ENCODE measurements at regions of chr3 and their contacts with region 1.

Region 1: DNA sequence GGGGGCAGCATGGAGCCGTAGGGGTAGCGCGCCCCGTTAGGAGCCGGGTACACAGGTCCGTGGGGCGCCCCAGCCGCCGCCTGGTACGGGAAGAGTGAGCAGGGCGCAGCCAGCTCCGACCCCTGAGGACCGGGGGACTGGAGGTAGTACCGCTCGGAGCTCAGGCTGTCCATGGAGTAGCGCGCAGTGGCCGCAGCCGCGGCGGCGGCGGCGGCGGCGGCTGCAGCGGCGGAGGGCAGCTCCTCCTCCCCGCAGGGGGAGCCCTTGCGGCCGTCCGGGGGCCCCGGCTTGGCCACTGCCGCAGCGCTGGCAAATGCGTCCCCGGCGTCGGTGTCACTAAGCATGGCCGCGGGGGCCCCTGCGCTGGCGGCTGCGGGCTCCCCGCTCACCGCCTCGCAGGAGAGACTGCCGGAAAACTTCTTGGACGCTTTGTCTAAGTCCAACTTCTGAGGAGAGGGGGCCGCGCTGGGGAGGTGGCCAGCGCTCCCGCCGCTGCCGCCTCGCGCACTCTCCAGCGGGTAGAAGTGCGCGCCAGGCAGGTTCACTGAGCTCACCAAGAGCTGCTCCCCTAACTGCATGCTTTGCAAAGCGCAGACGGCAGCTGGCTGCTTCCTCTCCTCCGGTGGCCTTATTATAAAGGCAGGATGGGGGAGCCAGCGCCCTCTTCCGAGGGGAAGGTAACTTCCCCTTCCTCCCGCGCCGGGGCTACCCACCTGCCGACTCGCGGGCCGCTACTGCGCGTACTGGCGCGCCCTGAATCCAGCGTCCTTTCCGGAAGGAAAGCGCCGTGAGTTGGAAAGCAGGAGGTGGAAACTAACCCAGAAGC is at the start of gene EOMES:
- DNase-seq: peak; percentile 68 to 90 (median 78)
- H3K4me3 ChIP-seq: peak within 1 kb of the TSS; percentile 73
- H3K4me3 Mint-ChIP-seq: peak within 1 kb of the TSS; percentile 95 to 100 (median 99)
- H3K27ac ChIP-seq: peak within 1 kb of the TSS; percentile 64
- H3K27ac Mint-ChIP-seq: peak within 1 kb of the TSS; percentile 77 to 98 (median 94)
- H3K4me1 ChIP-seq: peaks cover 25% of the 10 kb centered on the region
- H3K4me1 Mint-ChIP-seq: peaks cover 46 to 57% (median 50%) of the 10 kb centered on the region in 3 donors
- H3K27me3 ChIP-seq: peaks cover 22% of the 10 kb centered on the region
- H3K27me3 Mint-ChIP-seq: peaks cover 29 to 38% of the 10 kb centered on the region in 2 donors
- total RNA-seq, gene EOMES: 37.1 to 37.2 TPM

Region 2: DNA sequence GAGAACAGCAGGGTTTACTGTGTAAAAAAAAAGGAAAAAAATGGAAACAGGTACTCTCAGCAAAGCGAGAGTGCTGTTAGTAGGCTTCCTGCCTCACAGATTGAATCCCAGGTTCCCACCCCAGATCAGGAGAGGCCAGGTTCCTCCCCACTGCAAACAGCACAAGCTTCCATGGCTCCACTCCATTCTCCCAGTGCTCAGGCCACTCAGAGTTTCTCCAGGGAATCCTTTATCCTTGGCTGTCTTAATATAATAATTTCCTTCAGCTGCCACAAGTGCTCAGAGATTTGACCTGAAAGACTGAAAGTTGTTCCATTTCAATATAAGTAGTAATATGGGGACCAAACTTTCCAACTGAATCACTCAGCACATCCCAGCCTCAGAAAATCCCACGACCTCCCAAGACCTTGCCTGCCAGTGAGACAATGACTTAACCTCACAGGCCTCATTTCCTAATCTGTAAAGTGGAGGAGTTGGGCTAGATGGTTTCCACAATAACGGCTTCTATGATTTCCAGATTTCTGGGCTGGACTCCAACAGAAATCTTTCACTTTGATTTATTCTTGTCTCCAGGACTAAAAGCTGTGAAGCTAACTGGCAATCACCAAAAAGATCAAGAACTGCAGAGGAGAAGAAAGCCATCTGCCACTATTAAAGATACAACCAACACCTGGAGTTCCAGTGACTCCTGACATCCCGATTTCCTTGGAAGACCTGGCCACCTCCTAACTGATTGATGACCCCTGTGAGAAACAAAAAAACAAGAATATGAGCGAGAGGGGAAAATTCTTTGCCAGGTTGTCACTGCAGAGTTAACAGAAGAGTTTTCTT is 642.3 kb before region 1 on chr3:
- CTCF ChIA-PET with region 1: no interaction called
- POLR2A ChIA-PET with region 1: no interaction called
- DNase-seq: no peak
- H3K4me3 ChIP-seq: no peak overlapping the region
- H3K4me3 Mint-ChIP-seq: no peak overlapping the region
- H3K27ac ChIP-seq: no peak overlapping the region
- H3K27ac Mint-ChIP-seq: no peak overlapping the region
- H3K4me1 ChIP-seq: no peaks in the 10 kb centered on the region
- H3K4me1 Mint-ChIP-seq: no peaks in the 10 kb centered on the region
- H3K27me3 ChIP-seq: no peaks in the 10 kb centered on the region
- H3K27me3 Mint-ChIP-seq: peaks cover 4 to 13% of the 10 kb centered on the region in 2 donors

Region 3: GRCh38 chr3:27134165-27134796 is 587.6 kb before region 1 on chr3:
- CTCF ChIA-PET with region 1: no interaction called
- POLR2A ChIA-PET with region 1: no interaction called
- DNase-seq: peak; percentile 26 to 70 (median 43)
- H3K4me3 ChIP-seq: no peak overlapping the region
- H3K4me3 Mint-ChIP-seq: no peak overlapping the region
- H3K27ac ChIP-seq: no peak overlapping the region
- H3K27ac Mint-ChIP-seq: no peak overlapping the region
- H3K4me1 ChIP-seq: no peaks in the 10 kb centered on the region
- H3K4me1 Mint-ChIP-seq: no peaks in the 10 kb centered on the region
- H3K27me3 ChIP-seq: no peaks in the 10 kb centered on the region
- H3K27me3 Mint-ChIP-seq: peaks cover 2 to 12% of the 10 kb centered on the region in 2 donors

Region 4: GRCh38 chr3:27737091-27737490 is 15.2 kb after region 1 on chr3:
- CTCF ChIA-PET with region 1: interaction called, 10 read pairs
- POLR2A ChIA-PET with region 1: interaction called, 3 read pairs
- DNase-seq: no peak
- H3K4me3 ChIP-seq: no peak overlapping the region
- H3K4me3 Mint-ChIP-seq: no peak overlapping the region
- H3K27ac ChIP-seq: no peak overlapping the region
- H3K27ac Mint-ChIP-seq: no peak overlapping the region
- H3K4me1 ChIP-seq: no peaks in the 10 kb centered on the region
- H3K4me1 Mint-ChIP-seq: no peaks in the 10 kb centered on the region
- H3K27me3 ChIP-seq: no peaks in the 10 kb centered on the region
- H3K27me3 Mint-ChIP-seq: peaks cover 3 to 4% of the 10 kb centered on the region in 2 donors

Region 5: DNA sequence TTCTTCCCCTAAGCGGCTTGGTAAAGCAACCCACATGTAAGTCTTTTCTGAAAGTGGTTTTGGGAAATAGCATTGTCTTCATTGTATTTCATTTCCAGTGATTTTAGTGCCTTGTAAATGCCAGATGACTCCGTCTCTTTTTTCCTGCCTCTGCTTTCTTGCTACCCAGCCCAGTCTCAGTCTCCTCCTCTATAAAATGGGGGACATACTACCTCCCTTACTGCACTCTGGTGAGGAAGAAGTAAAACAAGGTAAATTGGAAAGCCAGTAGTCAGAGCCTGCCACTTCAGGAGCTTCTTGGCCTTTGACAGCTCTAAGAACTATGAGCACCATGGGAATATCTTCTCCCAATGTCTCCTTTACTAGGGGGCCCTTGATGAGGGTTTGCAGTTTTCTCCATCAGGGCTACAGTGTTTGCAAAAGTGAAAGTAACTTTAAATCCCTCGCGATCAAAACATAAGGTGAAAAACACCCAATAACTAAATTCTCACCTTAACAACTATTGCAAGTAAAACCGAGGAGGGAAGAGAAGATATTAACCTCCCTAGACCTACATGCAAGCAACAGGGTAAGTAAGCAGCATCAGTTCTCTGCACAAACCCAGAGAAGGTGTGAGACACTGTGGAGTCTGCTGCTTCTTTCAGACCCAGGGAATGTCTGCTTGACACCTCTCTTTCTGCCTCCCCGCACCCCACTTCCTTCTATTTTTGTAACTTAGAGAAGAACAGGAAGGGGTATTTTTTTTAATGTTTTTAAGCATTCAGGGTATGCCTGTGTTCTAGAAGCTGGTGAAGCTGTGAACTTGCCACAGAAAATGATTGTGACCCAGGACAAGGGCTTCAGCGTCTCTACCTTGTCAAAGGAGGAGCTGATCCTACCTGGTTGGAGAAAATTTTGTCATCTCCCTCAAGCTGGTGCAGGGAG is 159.3 kb after region 1 on chr3:
- CTCF ChIA-PET with region 1: interaction called, 16 read pairs
- POLR2A ChIA-PET with region 1: interaction called, 7 read pairs
- DNase-seq: peak; percentile 38 to 83 (median 72)
- H3K4me3 ChIP-seq: peak overlapping the region; percentile 63
- H3K4me3 Mint-ChIP-seq: peak overlapping the region; percentile 63 to 88 (median 84)
- H3K27ac ChIP-seq: no peak overlapping the region
- H3K27ac Mint-ChIP-seq: peak overlapping the region; percentile 61 to 89 (median 80)
- H3K4me1 ChIP-seq: peaks cover 65% of the 10 kb centered on the region
- H3K4me1 Mint-ChIP-seq: peaks cover 60 to 82% (median 81%) of the 10 kb centered on the region in 3 donors
- H3K27me3 ChIP-seq: no peaks in the 10 kb centered on the region
- H3K27me3 Mint-ChIP-seq: no peaks in the 10 kb centered on the region

Region 6: DNA sequence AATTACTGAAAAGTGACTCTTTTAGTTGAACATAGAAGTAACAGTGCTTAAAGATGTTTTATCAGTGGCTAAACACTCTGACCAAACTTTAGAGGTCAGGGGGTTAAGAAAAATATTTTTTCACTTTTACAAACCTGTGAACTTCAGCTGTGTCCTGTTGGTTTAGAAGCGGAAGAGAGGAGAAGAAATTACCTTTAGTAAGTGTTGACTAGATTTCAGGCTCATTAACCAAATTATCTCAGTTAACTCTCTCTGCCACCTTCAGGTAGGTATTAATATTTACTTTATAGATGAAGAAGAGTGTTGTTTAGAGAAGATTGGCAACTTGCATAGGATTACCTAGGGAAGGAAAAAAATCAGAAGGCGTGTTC is 367.6 kb after region 1 on chr3:
- CTCF ChIA-PET with region 1: interaction called, 16 read pairs
- POLR2A ChIA-PET with region 1: no interaction called
- DNase-seq: peak in 2 of 5 donors; percentile 4 to 8
- H3K4me3 ChIP-seq: no peak overlapping the region
- H3K4me3 Mint-ChIP-seq: peak overlapping the region in 5 of 7 donors; percentile 0 to 30 (median 7)
- H3K27ac ChIP-seq: no peak overlapping the region
- H3K27ac Mint-ChIP-seq: peak overlapping the region in 7 of 8 donors; percentile 13 to 78 (median 56)
- H3K4me1 ChIP-seq: no peaks in the 10 kb centered on the region
- H3K4me1 Mint-ChIP-seq: peaks cover 11 to 18% (median 14%) of the 10 kb centered on the region in 3 donors
- H3K27me3 ChIP-seq: no peaks in the 10 kb centered on the region
- H3K27me3 Mint-ChIP-seq: peaks cover 0 to 2% of the 10 kb centered on the region in 2 donors

Region 7: GRCh38 chr3:28286595-28286994 is 564.7 kb after region 1 on chr3:
- CTCF ChIA-PET with region 1: interaction called, 61 read pairs
- POLR2A ChIA-PET with region 1: interaction called, 3 read pairs
- DNase-seq: peak in 2 of 5 donors; percentile 26 to 27
- H3K4me3 ChIP-seq: no peak overlapping the region
- H3K4me3 Mint-ChIP-seq: peak overlapping the region in 3 of 7 donors; percentile 44 to 79 (median 58)
- H3K27ac ChIP-seq: no peak overlapping the region
- H3K27ac Mint-ChIP-seq: peak overlapping the region in 7 of 8 donors; percentile 10 to 88 (median 62)
- H3K4me1 ChIP-seq: no peaks in the 10 kb centered on the region
- H3K4me1 Mint-ChIP-seq: peaks cover 57 to 73% (median 69%) of the 10 kb centered on the region in 3 donors
- H3K27me3 ChIP-seq: no peaks in the 10 kb centered on the region
- H3K27me3 Mint-ChIP-seq: no peaks in the 10 kb centered on the region

Region 8: DNA sequence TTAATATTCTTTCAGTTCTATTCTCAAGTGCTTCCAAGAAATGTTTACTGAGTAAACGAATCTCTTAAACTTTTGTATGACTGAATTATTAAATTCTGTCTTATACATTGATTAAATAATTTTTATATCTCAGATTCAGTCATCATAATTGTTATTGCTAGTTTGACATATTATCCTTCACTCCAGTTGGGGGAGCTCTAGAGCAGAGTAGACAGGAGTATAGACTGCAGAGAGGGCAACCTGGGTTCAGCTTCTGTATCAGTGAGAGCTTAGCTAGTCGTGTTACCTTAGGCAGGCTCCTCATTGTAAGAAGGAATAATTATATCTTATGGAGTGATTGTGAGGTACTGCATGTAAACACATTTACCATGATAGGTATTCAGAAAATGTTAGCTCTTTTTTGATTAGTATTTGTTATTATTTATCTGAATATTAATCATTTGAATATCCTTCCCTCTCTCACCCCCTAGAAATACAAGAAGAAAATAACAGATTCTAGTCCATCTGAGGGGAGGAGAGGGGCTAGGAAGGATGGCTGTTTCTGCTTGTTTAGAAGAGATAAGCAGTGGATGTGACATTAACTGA is 595.6 kb after region 1 on chr3:
- CTCF ChIA-PET with region 1: interaction called, 37 read pairs
- POLR2A ChIA-PET with region 1: no interaction called
- DNase-seq: peak; percentile 10 to 54 (median 31)
- H3K4me3 ChIP-seq: no peak overlapping the region
- H3K4me3 Mint-ChIP-seq: peak overlapping the region in 1 of 7 donors; percentile 41
- H3K27ac ChIP-seq: no peak overlapping the region
- H3K27ac Mint-ChIP-seq: peak overlapping the region in 3 of 8 donors; percentile 22 to 66 (median 23)
- H3K4me1 ChIP-seq: peaks cover 5% of the 10 kb centered on the region
- H3K4me1 Mint-ChIP-seq: peaks cover 31 to 78% (median 62%) of the 10 kb centered on the region in 3 donors
- H3K27me3 ChIP-seq: no peaks in the 10 kb centered on the region
- H3K27me3 Mint-ChIP-seq: no peaks in the 10 kb centered on the region

Region 9: DNA sequence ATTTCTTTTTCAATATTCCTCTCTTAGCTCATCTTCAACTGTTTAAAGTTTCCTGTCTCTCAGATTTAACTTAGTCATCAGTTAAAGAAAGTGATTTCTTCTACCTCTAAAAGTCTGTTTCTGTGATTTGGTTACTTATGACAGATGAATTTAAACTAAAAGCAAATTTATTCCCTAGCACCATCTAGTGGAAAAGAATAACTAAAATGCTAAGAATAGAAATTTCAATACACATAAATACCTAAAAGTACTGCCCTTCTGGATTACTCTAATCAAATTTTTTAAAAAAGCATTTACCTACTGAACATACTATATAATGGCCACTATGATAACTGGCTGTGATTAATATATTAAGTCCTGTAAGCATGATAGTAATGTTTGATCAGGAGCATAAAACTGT is 612.6 kb after region 1 on chr3:
- CTCF ChIA-PET with region 1: interaction called, 13 read pairs
- POLR2A ChIA-PET with region 1: interaction called, 59 read pairs
- DNase-seq: no peak
- H3K4me3 ChIP-seq: no peak overlapping the region
- H3K4me3 Mint-ChIP-seq: no peak overlapping the region
- H3K27ac ChIP-seq: no peak overlapping the region
- H3K27ac Mint-ChIP-seq: peak overlapping the region in 2 of 8 donors; percentile 13 to 64
- H3K4me1 ChIP-seq: peaks cover 6% of the 10 kb centered on the region
- H3K4me1 Mint-ChIP-seq: peaks cover 5 to 25% (median 25%) of the 10 kb centered on the region in 3 donors
- H3K27me3 ChIP-seq: no peaks in the 10 kb centered on the region
- H3K27me3 Mint-ChIP-seq: no peaks in the 10 kb centered on the region

Measured in CD8-positive, alpha-beta memory T cell (primary cell).